PC-9 (cell line): ENCODE measurements at regions of chr4 and their contacts with region 1.

Region 1: DNA sequence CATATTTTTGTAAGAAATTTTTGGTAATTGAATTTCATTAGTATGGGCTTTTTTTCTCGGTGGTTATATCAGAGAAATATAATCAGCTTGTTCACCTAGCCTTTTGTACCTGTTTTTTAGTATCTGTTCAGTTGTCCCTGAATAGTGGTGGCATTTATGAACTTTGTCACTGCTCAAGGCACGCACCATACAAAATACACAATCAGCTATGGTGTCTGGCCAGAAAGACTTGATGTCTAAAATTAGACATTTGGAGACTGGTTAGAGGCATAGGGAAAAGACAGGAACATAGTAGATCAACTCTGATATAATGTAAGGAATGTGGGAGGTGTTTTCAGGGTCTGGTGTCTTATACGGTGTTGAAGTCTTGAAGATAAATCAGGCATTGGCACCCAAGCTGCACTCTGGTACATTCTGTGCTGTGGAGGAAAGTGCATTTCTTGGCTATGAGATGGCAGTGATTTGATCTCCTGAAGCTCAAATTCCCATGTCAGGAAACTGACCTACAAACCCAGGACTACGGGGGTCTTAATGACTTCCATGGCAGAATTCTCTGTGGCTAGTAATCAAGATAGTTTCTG is 3.6 kb downstream of the ART3 start:
- DNase-seq: no peak
- H3K4me3 ChIP-seq: no peak overlapping the region
- H3K27ac ChIP-seq: no peak overlapping the region
- H3K4me1 ChIP-seq: no peaks in the 10 kb centered on the region
- H3K27me3 ChIP-seq: no peaks in the 10 kb centered on the region
- CTCF ChIP-seq: no peak

Region 2: GRCh38 chr4:75790024-75790423 is 288.1 kb before region 1 on chr4:
- CTCF ChIA-PET with region 1: no interaction called
- POLR2A ChIA-PET with region 1: no interaction called
- intact Hi-C with region 1: no loop called
- DNase-seq: no peak
- H3K4me3 ChIP-seq: no peak overlapping the region
- H3K27ac ChIP-seq: no peak overlapping the region
- H3K4me1 ChIP-seq: no peaks in the 10 kb centered on the region
- H3K27me3 ChIP-seq: no peaks in the 10 kb centered on the region
- CTCF ChIP-seq: no peak

Region 3: GRCh38 chr4:76873495-76873894 is 795.4 kb after region 1 on chr4:
- CTCF ChIA-PET with region 1: interaction called, 18 read pairs
- POLR2A ChIA-PET with region 1: no interaction called
- intact Hi-C with region 1: no loop called
- DNase-seq: no peak
- H3K4me3 ChIP-seq: no peak overlapping the region
- H3K27ac ChIP-seq: no peak overlapping the region
- H3K4me1 ChIP-seq: no peaks in the 10 kb centered on the region
- H3K27me3 ChIP-seq: no peaks in the 10 kb centered on the region
- CTCF ChIP-seq: no peak